ENCODE measurements at regions of chr17 and their contacts with region 1.

Region 1: GRCh38 chr17:81711814-81712467 is at the start of gene SLC25A10:
- DNase-seq: peak; percentile 87 to 89
- ATAC-seq: peak; percentile 60 to 65
- H3K4me3 ChIP-seq: peak within 1 kb of the TSS; percentile 70
- H3K27ac ChIP-seq: peak within 1 kb of the TSS; percentile 95
- H3K4me1 ChIP-seq: peaks cover 20% of the 10 kb centered on the region
- CTCF ChIP-seq: no peak
- EP300 ChIP-seq: no peak
- POLR2A ChIP-seq: peak; percentile 36; the same call in 1 of the 2 replicates
- RAD21 ChIP-seq: no peak
- polyA plus RNA-seq, gene SLC25A10: 20.0 and 25.8 TPM in 2 replicates

Region 2: DNA sequence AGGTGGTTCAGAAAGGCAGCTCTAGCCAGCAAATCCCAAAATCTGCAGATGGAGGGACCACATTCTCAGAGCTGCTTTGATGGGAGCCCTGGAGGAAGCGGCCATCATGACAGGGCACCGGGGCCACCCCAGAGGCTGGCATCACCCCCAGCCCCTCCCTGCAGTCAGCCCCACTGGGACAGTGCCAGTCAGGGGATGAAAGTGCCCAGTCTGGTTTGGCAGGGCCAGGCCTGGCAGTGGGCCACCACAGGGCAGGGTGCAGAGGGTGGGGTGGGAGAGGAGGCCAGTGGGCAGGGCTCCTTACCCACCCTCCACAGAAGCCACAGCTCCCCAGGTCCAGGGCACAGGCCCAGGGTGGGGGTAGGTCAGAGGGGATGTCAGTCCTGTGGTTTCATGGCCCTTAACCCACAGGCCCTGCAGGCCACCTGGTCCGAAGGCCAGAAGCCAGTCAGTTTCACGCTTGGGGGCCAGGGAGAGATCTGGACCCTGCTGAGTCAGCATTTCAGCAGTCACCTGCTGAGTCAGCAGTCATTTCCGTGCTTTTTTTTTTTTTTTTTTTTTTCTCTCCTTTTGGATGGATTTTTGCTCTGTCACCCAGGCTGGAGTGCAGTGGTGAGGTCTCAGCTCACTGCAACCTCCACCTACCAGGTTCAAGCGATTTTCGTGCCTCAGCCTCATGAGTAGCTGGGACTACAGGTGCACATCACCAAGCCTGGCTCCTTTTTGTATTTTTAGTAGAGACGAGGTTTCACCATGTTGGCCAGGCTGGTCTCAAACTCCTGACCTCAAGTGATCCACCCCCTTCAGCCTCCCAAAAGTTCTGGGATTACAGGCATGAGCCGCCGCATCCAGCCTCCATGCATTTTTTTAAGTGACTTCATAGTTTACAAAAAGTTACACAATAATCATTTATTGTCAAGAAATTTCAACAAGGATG is 10.5 kb after region 1 on chr17:
- CTCF ChIA-PET with region 1: interaction called, 16 read pairs
- POLR2A ChIA-PET with region 1: interaction called, 18 read pairs
- DNase-seq: no peak
- ATAC-seq: peak; percentile 29 to 40; a peak in 5 of 6 replicates
- H3K4me3 ChIP-seq: no peak overlapping the region
- H3K27ac ChIP-seq: peak overlapping the region in 1 of 2 experiments; percentile 72; a peak in 3 of 6 replicates
- H3K4me1 ChIP-seq: peaks cover 19% of the 10 kb centered on the region
- CTCF ChIP-seq: no peak
- EP300 ChIP-seq: no peak
- POLR2A ChIP-seq: no peak; the same call in 1 of the 2 replicates
- RAD21 ChIP-seq: no peak

Measured in A549 (cell line).